Heart right ventricle (tissue), 16 donors: ENCODE measurements at regions of chr20 and their contacts with region 1.

Region 1: DNA sequence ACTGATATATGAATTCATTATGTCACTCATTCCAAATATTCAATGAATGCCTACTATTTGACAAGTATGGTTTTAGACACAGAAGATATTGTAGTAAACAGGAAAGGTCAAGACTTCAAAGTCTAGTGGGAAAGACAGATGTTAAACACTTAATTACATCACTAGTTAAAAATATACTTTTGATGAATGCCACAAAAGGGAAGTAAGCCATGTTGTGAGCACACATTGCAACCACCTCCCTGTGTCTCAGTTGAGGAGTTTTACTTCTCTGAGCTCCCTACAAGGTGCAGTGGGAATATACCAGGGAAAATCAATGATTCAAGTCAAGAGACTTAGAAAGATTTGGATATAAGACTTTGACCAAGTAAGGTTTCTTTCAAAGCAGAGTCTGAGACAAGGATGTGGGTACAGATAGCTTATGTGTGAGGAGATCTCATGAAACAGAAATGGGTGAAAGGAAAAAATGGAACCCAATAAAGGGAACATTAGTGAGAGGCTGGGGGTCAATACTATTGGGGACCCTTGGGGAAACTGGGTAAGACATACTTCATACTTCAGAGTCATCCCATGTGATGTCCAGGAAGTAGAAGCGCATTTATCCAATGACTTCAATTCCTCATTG is 503.7 kb downstream of the KIF16B start:
- DNase-seq: no peak
- ATAC-seq: no peak
- H3K4me3 ChIP-seq: no peak overlapping the region
- H3K27ac ChIP-seq: no peak overlapping the region
- H3K4me1 ChIP-seq: peaks cover 0 to 12% (median 4%) of the 10 kb centered on the region in 9 donors
- H3K27me3 ChIP-seq: no peaks in the 10 kb centered on the region
- CTCF ChIP-seq: no peak

Region 2: DNA sequence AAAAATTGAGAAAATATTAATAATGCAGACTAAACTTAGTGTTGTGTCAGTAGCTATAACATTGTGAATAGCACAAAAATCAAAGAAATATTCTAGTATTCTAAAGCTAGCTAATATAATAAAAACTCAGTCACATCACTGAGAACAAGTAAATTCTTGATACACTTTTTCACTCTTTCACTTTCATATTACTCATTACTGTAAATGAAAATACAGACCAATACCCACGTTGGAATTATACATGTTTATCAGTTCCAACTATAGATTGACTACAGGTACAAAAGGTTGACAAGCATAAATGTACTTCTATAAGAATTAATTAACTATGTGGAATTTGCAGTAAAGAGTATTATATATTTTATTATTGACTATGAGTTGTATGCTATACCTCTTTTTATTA is 688.7 kb before region 1 on chr20:
- intact Hi-C with region 1: loop called in 1 of 10 experiments (anchors 10 kb)
- DNase-seq: no peak
- ATAC-seq: no peak
- H3K4me3 ChIP-seq: no peak overlapping the region
- H3K27ac ChIP-seq: no peak overlapping the region
- H3K4me1 ChIP-seq: no peaks in the 10 kb centered on the region
- H3K27me3 ChIP-seq: no peaks in the 10 kb centered on the region
- CTCF ChIP-seq: no peak